ENCODE measurements at regions of chr15 and their contacts with region 1.

Region 1: DNA sequence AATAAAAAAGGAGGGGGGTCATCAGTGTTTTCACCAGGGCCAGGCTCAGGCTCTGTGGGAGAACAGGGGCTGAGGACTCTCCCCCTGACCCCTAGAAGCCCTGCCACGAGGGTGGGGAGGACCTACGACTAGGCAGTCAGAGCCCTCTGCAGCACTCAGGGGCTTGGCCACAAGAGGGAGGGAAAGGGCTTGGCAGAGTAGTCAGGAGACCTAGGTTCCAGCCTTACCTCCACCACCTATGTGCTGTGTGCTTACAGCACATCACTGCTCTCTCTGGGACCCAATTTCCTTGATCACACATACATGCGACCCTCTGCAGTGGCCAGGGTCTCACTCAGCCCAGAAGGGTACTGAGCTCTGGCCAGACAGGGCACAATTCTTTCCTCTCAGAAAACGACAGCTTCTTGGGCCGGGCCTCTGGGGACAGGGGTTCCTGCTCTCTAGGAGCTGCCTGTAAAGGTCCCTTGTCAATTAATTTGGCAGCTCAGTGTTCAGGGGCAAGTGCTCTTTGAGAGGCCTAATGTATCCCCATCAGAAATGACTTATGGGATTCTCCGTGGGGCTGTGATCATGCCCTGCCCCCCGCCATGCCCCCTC is 16.4 kb upstream of the SKIC8 start:
- DNase-seq: peak; percentile 75
- ATAC-seq: peak; percentile 91
- H3K4me3 Mint-ChIP-seq: no peak overlapping the region
- H3K27ac Mint-ChIP-seq: peak overlapping the region; percentile 95
- H3K4me1 Mint-ChIP-seq: peaks cover 36% of the 10 kb centered on the region
- H3K27me3 Mint-ChIP-seq: no peaks in the 10 kb centered on the region
- CTCF ChIP-seq: no peak

Region 2: DNA sequence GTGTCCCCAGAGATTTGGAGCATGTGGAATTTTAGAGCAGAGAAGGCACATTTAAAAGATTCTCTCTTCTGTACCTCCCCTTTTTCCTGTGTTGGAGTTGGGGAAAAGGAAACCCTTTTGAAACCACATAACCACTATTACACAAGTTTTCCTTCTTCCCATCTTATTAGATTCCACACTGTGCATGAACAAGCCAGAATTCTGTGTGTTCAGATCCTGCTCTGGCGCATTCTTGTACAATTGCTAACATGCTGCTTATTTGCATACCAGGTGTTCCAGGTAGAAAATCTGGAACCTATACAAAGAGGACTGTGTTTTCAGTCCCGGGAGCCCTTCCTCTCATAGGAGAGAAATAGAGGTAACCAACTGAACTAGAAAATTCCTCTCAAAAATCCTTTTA is 182.0 kb before region 1 on chr15:
- CTCF ChIA-PET with region 1: no interaction called
- POLR2A ChIA-PET with region 1: no interaction called
- DNase-seq: no peak
- ATAC-seq: no peak
- H3K4me3 Mint-ChIP-seq: no peak overlapping the region
- H3K27ac Mint-ChIP-seq: no peak overlapping the region
- H3K4me1 Mint-ChIP-seq: peaks cover 24% of the 10 kb centered on the region
- H3K27me3 Mint-ChIP-seq: no peaks in the 10 kb centered on the region
- CTCF ChIP-seq: no peak

Region 3: DNA sequence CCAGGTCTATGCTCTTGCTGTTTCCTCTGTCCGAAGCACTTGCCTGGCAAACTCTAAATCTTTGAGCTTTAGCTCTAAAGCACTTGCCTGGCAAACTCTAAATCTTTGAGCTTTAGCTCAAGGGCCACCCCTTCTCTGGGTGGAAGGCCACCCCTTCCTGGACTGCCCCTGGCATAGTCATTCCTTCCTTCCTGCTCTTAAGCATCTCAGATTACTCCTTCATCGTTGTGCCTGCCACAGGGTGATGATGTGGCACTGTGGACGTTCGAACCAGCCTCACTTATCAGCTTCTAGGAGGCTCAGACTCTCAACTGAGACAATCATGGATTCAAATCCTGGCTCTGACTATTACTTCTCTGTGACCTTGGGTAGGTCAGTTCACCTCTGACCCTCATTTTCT is 13.8 kb after region 1 on chr15:
- CTCF ChIA-PET with region 1: interaction called, 10 read pairs
- POLR2A ChIA-PET with region 1: no interaction called
- DNase-seq: no peak
- ATAC-seq: no peak
- H3K4me3 Mint-ChIP-seq: no peak overlapping the region
- H3K27ac Mint-ChIP-seq: no peak overlapping the region
- H3K4me1 Mint-ChIP-seq: peaks cover 10% of the 10 kb centered on the region
- H3K27me3 Mint-ChIP-seq: no peaks in the 10 kb centered on the region
- CTCF ChIP-seq: no peak

Region 4: GRCh38 chr15:78340231-78341056 is 24.7 kb after region 1 on chr15 and contains the start of gene CRABP1:
- CTCF ChIA-PET with region 1: interaction called, 11 read pairs
- POLR2A ChIA-PET with region 1: no interaction called
- DNase-seq: peak; percentile 76
- ATAC-seq: peak; percentile 75
- H3K4me3 Mint-ChIP-seq: peak within 1 kb of the TSS; percentile 80
- H3K27ac Mint-ChIP-seq: no peak within 1 kb of the TSS
- H3K4me1 Mint-ChIP-seq: peaks cover 28% of the 10 kb centered on the region
- H3K27me3 Mint-ChIP-seq: peaks cover 32% of the 10 kb centered on the region
- CTCF ChIP-seq: no peak
- total RNA-seq, gene CRABP1: 374 to 444 TPM (median 377 TPM) in 3 replicates

Region 5: DNA sequence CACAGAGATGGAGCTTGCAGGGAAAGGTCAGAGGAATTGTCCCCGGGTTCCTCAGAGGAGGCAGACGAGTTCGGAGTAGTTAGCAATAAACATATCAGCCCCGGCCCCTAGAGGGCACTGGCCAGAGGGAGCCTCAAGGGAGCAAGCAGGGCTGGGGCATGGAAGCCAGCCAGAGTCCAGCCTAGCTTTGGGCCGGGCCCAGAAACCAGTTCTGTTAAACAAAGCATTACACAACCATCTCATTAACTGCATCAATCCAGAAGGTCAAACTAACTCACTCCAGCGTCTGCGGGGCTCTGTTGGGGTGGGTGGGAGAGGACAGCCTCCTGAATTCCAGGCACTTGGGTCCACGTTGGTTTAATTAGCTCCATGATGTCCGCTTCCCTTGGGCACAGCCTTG is 81.2 kb after region 1 on chr15:
- CTCF ChIA-PET with region 1: interaction called, 16 read pairs
- POLR2A ChIA-PET with region 1: no interaction called
- DNase-seq: peak; percentile 45
- ATAC-seq: peak; percentile 14; the same call in 1 of the 2 replicates
- H3K4me3 Mint-ChIP-seq: no peak overlapping the region
- H3K27ac Mint-ChIP-seq: no peak overlapping the region
- H3K4me1 Mint-ChIP-seq: peaks cover 66% of the 10 kb centered on the region
- H3K27me3 Mint-ChIP-seq: no peaks in the 10 kb centered on the region; the same call in 1 of the 2 replicates
- CTCF ChIP-seq: no peak

Region 6: DNA sequence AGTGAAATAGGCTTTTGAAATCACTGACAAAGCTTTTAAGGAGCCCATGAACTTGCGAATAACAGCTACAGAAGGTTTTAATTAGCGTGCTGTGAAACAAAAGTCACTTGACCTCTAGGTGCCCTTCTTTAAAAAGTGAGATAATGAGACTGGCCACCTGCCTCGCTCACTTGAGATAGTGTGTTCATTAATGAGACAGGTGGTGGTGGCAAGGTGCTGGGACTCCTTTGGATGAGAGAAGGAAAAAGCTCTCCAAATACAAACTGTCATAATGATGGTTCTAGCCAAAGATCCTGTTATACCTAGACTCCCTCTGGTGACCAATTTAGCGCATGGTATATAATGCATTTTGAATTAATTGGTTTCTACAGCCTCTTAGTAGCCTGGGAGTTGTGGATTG is 99.5 kb after region 1 on chr15:
- CTCF ChIA-PET with region 1: interaction called, 25 read pairs
- POLR2A ChIA-PET with region 1: no interaction called
- DNase-seq: no peak
- ATAC-seq: peak; percentile 85
- H3K4me3 Mint-ChIP-seq: no peak overlapping the region
- H3K27ac Mint-ChIP-seq: no peak overlapping the region
- H3K4me1 Mint-ChIP-seq: peaks cover 12% of the 10 kb centered on the region
- H3K27me3 Mint-ChIP-seq: peaks cover 8% of the 10 kb centered on the region; the same call in 1 of the 2 replicates
- CTCF ChIP-seq: no peak

Region 7: DNA sequence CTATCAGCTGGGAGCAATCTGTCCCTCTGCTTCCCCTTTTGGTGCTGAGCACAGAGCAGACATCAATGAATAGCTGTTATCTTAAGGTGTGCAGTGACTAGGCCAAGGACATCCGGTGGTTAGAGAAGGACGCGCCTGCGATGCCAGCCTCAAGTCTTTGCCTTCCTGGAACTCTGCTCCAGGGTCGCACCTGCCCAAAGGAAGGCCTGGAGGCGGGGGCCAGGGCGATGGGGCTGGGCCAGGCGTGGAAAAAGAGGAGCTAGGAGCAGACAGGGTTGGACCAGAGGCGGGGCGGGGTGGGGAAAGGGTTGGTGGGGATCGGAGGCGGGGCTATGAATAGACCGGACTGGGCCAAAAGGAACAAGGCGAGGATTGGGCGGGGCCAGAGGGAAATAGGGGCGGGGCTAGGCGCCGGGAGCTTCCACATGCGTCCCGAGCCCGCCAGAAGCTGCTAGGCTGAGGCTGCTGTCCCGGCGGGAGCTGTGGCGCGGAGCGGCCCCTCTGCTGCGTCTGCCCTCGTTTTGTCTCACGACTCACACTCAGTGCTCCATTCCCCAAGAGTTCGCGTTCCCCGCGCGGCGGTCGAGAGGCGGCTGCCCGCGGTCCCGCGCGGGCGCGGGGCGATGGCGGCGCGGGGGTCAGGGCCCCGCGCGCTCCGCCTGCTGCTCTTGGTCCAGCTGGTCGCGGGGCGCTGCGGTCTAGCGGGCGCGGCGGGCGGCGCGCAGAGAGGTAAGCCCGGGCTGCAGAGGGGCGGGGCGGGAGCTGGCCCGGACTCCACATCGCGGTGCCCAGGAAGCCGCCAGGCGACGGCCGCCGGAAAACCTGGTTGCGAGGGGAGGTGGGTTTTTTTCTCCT is 249.5 kb after region 1 on chr15 and contains the start of gene CHRNA5:
- CTCF ChIA-PET with region 1: interaction called, 11 read pairs
- POLR2A ChIA-PET with region 1: interaction called, 3 read pairs
- DNase-seq: peak; percentile 100
- ATAC-seq: peak; percentile 96
- H3K4me3 Mint-ChIP-seq: peak within 1 kb of the TSS; percentile 90
- H3K27ac Mint-ChIP-seq: peak within 1 kb of the TSS; percentile 80
- H3K4me1 Mint-ChIP-seq: peaks cover 23% of the 10 kb centered on the region
- H3K27me3 Mint-ChIP-seq: no peaks in the 10 kb centered on the region; the same call in 1 of the 2 replicates
- CTCF ChIP-seq: no peak
- total RNA-seq, gene CHRNA5: 21.0 to 23.3 TPM (median 21.2 TPM) in 3 replicates

Region 8: DNA sequence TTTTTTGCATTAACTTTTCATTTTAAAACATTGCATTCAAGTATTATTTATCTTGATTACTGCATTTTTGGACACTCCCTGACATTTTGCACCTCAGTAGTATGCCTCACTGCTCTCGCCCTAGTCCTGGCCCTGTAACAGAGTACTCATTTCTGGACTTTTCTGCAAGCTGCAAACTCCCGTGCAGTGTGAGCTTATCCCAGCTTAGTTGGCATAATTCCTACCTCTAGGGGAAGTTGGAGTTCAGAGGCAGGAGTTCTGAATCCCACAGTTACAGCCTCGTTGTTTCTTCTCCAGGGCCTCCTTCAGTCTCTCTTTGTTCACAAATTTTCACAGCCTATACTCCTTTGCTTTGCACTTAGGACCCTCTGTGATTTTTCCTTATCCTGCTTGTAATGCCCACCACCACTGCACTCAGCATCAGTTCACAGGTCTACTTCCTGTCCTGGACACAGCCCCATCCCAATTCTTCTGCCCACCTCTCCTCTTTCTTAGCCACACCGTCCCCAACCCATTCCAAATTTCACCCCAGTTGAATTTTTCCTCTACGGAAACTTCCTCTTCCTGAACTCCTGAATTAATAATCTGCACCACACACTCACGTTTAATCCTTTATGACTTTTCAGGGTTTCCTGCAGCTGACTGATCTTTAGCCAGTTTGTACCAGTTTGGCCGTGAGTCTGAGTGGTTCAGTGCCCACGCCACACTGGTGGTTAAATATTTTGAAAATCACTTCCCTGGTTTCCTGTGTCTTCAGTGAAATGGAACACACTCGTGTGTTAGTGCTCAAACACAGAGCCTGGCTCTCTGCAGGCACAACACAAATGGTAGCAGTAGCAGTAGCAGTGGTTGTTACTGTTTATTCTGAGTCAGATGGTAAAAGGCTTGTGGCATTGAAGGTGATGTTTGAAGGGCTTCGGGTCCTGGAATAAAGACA is 635.4 kb after region 1 on chr15:
- CTCF ChIA-PET with region 1: no interaction called
- POLR2A ChIA-PET with region 1: no interaction called
- DNase-seq: no peak
- ATAC-seq: peak; percentile 57
- H3K4me3 Mint-ChIP-seq: no peak overlapping the region
- H3K27ac Mint-ChIP-seq: no peak overlapping the region
- H3K4me1 Mint-ChIP-seq: peaks cover 18% of the 10 kb centered on the region
- H3K27me3 Mint-ChIP-seq: peaks cover 17% of the 10 kb centered on the region
- CTCF ChIP-seq: no peak

Measured in WTC11 (cell line).